IMR-90 (cell line): ENCODE measurements at regions of chr6 and their contacts with region 1.

Region 1: GRCh38 chr6:21109391-21110178 is 484.0 kb upstream of the SOX4 start:
- DNase-seq: peak; percentile 59
- ATAC-seq: peak; percentile 57
- H3K4me3 ChIP-seq: no peak overlapping the region
- H3K27ac ChIP-seq: no peak overlapping the region
- H3K4me1 ChIP-seq: peaks cover 6% of the 10 kb centered on the region
- H3K27me3 ChIP-seq: no peaks in the 10 kb centered on the region
- CTCF ChIP-seq: no peak
- POLR2A ChIP-seq: no peak
- RAD21 ChIP-seq: no peak

Region 2: DNA sequence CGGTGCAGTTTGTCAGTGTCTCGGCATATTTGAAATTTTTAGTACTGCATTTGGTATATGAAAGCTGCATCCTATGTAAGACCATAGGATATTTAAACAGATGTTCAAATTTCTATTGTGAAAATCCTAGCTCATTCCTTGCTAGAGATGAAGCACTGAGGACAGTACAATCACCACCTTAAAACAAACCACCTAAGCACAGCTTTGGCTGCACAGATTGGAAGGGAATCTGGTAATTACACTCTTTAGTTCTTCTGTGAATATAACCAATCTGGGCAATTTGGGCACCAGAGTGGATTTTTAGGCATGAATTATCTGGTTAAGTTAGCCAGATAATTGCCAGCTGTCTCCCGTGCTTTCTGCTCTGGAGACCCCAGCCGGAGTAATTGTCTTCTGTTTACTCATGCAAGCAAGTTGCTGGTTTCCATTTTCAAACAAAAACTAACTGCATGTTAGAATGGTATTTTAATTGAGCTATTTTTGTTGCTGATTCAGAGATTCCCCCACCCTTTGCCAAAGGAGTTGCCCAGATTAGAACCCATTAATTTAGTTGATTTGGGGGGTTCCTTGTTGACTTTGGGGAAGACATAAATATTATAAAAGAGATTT is 671.0 kb before region 1 on chr6:
- CTCF ChIA-PET with region 1: no interaction called
- POLR2A ChIA-PET with region 1: no interaction called
- dilution Hi-C with region 1: no loop called
- in situ Hi-C with region 1: no loop called
- intact Hi-C with region 1: no loop called
- DNase-seq: no peak
- ATAC-seq: no peak
- H3K4me3 ChIP-seq: no peak overlapping the region
- H3K27ac ChIP-seq: no peak overlapping the region
- H3K4me1 ChIP-seq: peaks cover 4% of the 10 kb centered on the region; the same call in 1 of the 2 replicates
- H3K27me3 ChIP-seq: no peaks in the 10 kb centered on the region
- CTCF ChIP-seq: no peak
- POLR2A ChIP-seq: no peak
- RAD21 ChIP-seq: no peak

Region 3: GRCh38 chr6:20678831-20679352 is 430.7 kb before region 1 on chr6:
- CTCF ChIA-PET with region 1: no interaction called
- POLR2A ChIA-PET with region 1: no interaction called
- dilution Hi-C with region 1: no loop called
- in situ Hi-C with region 1: no loop called
- intact Hi-C with region 1: no loop called
- DNase-seq: peak; percentile 12
- ATAC-seq: no peak
- H3K4me3 ChIP-seq: no peak overlapping the region
- H3K27ac ChIP-seq: no peak overlapping the region
- H3K4me1 ChIP-seq: no peaks in the 10 kb centered on the region
- H3K27me3 ChIP-seq: no peaks in the 10 kb centered on the region
- CTCF ChIP-seq: no peak
- POLR2A ChIP-seq: no peak
- RAD21 ChIP-seq: no peak

Region 4: DNA sequence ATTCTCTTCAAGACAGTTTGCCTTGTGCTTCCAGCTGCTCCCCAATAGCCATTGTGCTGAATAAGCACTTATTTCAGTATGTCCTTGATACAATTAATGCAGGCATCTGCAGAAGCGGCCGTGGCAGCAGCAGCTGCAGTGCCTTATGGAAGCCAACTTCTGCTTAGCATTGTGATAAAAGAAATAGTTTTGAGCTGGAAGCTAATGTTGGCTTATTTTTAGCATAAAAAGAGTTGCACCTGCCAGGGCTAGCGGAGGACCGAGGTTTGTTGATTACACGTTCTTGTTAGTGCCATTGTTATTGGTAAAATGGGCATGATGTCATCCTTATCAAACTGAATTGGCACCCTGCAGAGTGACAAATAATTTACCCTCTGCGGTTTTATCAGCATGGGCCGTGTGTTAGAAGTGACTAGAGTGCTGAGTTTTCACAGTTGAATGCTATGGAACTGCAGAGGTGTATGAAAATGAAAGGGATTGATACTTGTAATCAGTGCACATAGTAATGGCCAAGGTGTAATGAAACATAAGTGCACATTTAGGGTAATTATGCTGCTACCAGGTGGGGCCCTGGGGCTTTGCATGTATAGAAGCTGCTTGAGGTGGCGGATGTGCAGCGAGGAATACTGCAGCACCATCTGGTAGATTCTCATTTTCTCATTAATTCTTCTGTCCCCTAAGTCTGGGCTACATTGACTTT is 241.0 kb before region 1 on chr6:
- CTCF ChIA-PET with region 1: no interaction called
- POLR2A ChIA-PET with region 1: no interaction called
- dilution Hi-C with region 1: no loop called
- in situ Hi-C with region 1: no loop called
- intact Hi-C with region 1: no loop called
- DNase-seq: no peak
- ATAC-seq: no peak
- H3K4me3 ChIP-seq: no peak overlapping the region
- H3K27ac ChIP-seq: no peak overlapping the region
- H3K4me1 ChIP-seq: peaks cover 2% of the 10 kb centered on the region; the same call in 1 of the 2 replicates
- H3K27me3 ChIP-seq: no peaks in the 10 kb centered on the region
- CTCF ChIP-seq: no peak
- POLR2A ChIP-seq: no peak
- RAD21 ChIP-seq: no peak

Region 5: DNA sequence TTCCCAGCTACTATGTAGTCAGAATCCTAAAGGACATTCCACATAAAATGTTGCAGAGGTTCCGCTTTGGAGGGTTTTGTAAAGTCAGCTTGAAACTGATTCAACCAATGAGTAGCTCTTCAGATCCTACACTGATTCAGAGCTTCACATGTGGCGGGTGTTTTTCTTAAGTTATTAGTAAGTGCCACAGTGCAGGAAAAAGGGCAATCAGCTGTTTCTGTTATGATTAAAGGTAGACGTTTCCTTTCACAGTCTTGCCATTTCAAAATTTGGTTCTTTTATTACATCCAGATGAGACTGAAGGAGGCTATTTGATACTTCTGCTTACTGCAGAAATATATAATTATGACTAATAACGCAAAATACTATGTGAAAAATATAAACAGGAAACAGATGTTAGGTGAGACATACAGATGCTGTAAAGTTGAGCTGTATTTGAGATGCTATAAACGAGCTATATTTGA is 131.4 kb before region 1 on chr6:
- CTCF ChIA-PET with region 1: no interaction called
- POLR2A ChIA-PET with region 1: no interaction called
- dilution Hi-C with region 1: no loop called
- in situ Hi-C with region 1: no loop called
- intact Hi-C with region 1: no loop called
- DNase-seq: peak; percentile 91
- ATAC-seq: peak; percentile 95
- H3K4me3 ChIP-seq: no peak overlapping the region
- H3K27ac ChIP-seq: no peak overlapping the region
- H3K4me1 ChIP-seq: peaks cover 2% of the 10 kb centered on the region
- H3K27me3 ChIP-seq: no peaks in the 10 kb centered on the region
- CTCF ChIP-seq: no peak
- POLR2A ChIP-seq: no peak
- RAD21 ChIP-seq: no peak

Region 6: GRCh38 chr6:21295506-21296240 is 186.1 kb after region 1 on chr6:
- CTCF ChIA-PET with region 1: no interaction called
- POLR2A ChIA-PET with region 1: no interaction called
- dilution Hi-C with region 1: no loop called
- in situ Hi-C with region 1: no loop called
- intact Hi-C with region 1: loop called (anchors 10 kb)
- DNase-seq: peak; percentile 3
- ATAC-seq: peak; percentile 29
- H3K4me3 ChIP-seq: no peak overlapping the region
- H3K27ac ChIP-seq: no peak overlapping the region
- H3K4me1 ChIP-seq: peaks cover 1% of the 10 kb centered on the region; the same call in 1 of the 2 replicates
- H3K27me3 ChIP-seq: no peaks in the 10 kb centered on the region; the same call in 1 of the 2 replicates
- CTCF ChIP-seq: no peak
- POLR2A ChIP-seq: no peak
- RAD21 ChIP-seq: no peak